ENCODE measurements at regions of chr2 and their contacts with region 1.

Region 1: GRCh38 chr2:149645391-149645790 is 57.8 kb upstream of the MMADHC start:
- DNase-seq: no peak
- H3K4me3 ChIP-seq: no peak overlapping the region
- CTCF ChIP-seq: peak; percentile 36

Region 2: GRCh38 chr2:149629026-149629425 is 16.4 kb before region 1 on chr2:
- CTCF ChIA-PET with region 1: interaction called, 11 read pairs
- POLR2A ChIA-PET with region 1: no interaction called
- DNase-seq: no peak
- H3K4me3 ChIP-seq: no peak overlapping the region
- CTCF ChIP-seq: no peak

Region 3: DNA sequence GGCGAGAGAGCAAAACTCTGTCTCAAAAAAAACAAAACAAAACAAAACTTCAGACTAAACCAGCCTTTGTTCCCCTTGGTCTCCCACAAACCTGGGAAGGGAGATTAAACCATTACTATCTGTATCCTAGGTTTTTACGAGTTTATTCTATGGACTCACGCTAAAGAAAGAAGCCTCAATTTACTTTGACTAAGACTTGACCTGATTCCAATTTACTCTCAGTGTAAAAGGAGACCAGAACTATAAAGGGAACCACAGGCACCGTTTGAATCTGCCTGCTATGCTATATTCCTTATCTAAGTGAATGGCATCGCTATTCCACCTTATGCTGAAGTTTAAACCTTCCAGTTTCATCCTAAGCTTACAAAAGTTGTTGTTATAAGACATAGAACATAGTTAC is 11.3 kb before region 1 on chr2:
- CTCF ChIA-PET with region 1: interaction called, 11 read pairs
- POLR2A ChIA-PET with region 1: no interaction called
- DNase-seq: no peak
- H3K4me3 ChIP-seq: no peak overlapping the region
- CTCF ChIP-seq: no peak